Activated naive CD4-positive, alpha-beta T cell treated with anti-CD3 and anti-CD28 coated beads, Interleukin-2, amount 10 ng/mL, durations not matched to agents 7 days and 5 days (primary cell): ENCODE measurements at regions of chr2 and their contacts with region 1.

Region 1: GRCh38 chr2:227238238-227239237 is 74.1 kb downstream of the COL4A3 start:
- DNase-seq: peak; percentile 71
- H3K4me3 Mint-ChIP-seq: no peak overlapping the region
- H3K27ac Mint-ChIP-seq: no peak overlapping the region
- H3K4me1 Mint-ChIP-seq: no peaks in the 10 kb centered on the region
- H3K27me3 Mint-ChIP-seq: peaks cover 15% of the 10 kb centered on the region

Region 2: DNA sequence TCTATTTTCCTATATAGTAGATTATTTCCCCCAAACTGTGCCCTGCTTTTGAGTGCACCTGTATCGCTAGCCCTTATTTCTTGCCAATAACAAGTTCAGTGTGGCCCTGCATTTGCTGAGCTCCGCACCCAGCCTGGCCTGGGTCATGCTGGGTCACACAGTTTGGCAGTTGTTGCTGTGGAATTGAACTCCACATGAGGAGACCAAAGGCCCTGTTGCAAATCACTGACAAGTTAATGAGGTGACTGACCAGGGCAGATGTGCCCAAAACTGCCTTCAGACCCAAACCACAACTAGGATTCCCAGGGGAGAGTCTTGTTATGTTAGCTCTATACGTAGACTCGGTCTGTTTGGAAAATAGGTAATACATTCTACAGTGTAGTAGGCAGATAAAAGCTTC is 105.6 kb before region 1 on chr2:
- CTCF ChIA-PET with region 1: interaction called, 58 read pairs
- DNase-seq: no peak
- H3K4me3 Mint-ChIP-seq: no peak overlapping the region
- H3K27ac Mint-ChIP-seq: no peak overlapping the region
- H3K4me1 Mint-ChIP-seq: no peaks in the 10 kb centered on the region
- H3K27me3 Mint-ChIP-seq: peaks cover 8% of the 10 kb centered on the region

Region 3: DNA sequence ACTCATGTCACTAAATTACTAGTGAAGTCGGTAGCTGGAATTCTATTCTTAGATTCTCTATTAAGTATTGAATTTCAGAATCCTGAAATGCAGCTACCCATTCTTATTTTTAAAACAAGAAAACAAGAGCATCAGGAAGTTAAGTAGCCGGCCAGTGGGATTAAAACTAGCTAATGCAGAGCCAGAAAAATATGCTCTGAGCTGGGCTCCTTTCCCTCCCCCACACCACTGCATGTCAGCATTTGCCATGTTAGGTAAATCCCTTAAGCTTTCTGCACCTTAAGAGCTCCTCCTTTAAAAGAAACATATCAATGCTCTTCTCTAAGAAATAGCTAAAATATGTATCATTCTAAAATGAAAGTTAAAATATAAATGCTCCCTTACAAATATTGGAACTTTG is 14.3 kb after region 1 on chr2:
- CTCF ChIA-PET with region 1: interaction called, 13 read pairs
- DNase-seq: no peak
- H3K4me3 Mint-ChIP-seq: no peak overlapping the region
- H3K27ac Mint-ChIP-seq: no peak overlapping the region
- H3K4me1 Mint-ChIP-seq: no peaks in the 10 kb centered on the region
- H3K27me3 Mint-ChIP-seq: peaks cover 5% of the 10 kb centered on the region

Region 4: DNA sequence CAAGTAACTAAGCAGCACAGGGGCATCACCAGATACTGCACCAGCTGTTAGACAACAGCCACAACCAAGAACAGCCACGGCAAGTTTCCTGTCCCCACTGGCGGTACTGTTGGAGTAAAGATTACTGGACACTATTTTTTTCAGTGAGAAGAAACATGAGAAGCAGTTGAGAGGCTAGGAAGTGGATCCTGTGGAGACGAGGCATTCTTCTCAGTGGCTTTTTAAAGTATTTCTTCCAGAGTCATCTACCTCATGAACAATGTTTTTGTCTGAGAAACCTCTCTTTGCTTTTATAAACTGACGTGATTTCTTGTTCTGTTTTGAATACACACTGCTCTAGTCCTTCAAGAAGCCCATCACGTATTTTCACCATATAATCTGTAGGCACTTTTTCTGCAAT is 121.8 kb after region 1 on chr2:
- CTCF ChIA-PET with region 1: no interaction called
- DNase-seq: no peak
- H3K4me3 Mint-ChIP-seq: no peak overlapping the region
- H3K27ac Mint-ChIP-seq: no peak overlapping the region
- H3K4me1 Mint-ChIP-seq: no peaks in the 10 kb centered on the region
- H3K27me3 Mint-ChIP-seq: no peaks in the 10 kb centered on the region